ENCODE measurements at regions of chr3 and their contacts with region 1.

Region 1: DNA sequence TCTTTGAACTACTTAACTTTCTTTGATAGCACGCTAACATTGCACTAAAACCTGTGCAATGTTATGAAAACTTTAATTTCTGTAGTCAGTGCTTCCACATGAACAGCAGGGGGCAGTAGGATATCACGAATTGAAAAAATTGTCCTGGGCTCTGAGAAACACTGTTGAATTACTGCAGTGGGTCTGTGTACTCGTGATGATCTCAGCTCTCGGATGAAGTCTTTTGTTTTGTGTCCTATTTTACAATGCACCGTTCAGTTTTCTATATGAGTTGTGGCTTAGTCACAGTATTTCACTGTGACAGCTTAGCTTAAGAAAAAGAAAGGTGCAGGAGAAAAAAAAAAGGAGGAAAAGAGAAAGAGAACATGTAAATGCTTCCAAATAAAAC is 141.3 kb upstream of the CCDC54 start:
- DNase-seq: peak in 3 of 5 donors; percentile 31 to 60 (median 52)
- ATAC-seq: peak; percentile 60 to 81 (median 74)
- H3K4me3 ChIP-seq: peak overlapping the region in 11 of 12 donors; percentile 21 to 62 (median 49)
- H3K27ac ChIP-seq: peak overlapping the region in 11 of 12 donors; percentile 16 to 70 (median 53)
- H3K4me1 ChIP-seq: peaks cover 0 to 18% (median 8%) of the 10 kb centered on the region in 12 donors
- H3K27me3 ChIP-seq: no peaks in the 10 kb centered on the region
- CTCF ChIP-seq: peak; percentile 81 to 94 (median 89)
- POLR2A ChIP-seq: no peak

Region 2: DNA sequence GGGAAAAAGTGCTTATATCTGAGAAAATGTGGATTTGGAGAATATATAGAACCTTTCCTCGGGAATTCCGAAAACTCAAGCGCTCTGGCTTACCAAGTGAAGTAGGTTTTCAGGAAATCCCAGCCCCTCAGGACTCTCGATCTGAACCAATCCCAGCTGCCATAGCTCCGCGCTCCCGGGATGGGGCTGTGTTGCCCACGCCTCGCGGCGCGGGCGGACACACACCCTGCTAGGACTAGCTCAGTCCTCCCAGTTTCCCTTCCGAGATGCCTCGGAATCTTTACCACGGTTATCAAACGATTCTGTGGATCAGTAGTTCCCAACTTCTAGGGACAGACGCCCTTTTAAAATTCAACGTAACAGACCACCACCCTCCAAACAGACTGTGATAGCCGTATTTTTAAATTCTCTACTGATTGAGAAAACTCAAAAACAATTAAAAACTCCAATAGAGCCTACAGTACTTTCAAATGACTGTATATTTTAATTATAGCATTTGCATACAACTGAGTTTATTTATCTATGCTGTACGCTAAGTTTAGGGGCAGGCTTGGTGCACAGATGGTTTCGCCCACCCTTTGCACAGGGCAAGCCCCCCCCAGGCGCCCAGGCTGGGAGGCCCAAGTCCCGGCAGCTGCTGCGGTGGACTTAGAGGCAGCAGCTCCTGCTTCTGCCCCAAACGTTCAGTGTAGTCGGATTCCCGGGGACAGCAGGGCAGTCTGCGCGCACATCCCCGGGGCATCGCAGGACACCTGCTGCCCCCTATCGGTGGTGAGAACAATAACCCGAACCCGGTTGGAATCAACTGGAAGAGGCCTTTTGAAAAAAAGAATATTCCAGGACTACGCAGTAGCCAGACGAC is 193.6 kb after region 1 on chr3:
- intact Hi-C with region 1: loop called in 7 of 10 experiments (anchors 5 to 10 kb)
- DNase-seq: peak; percentile 80 to 86 (median 81)
- ATAC-seq: peak; percentile 81 to 89 (median 87)
- H3K4me3 ChIP-seq: peak overlapping the region; percentile 15 to 94 (median 78)
- H3K27ac ChIP-seq: peak overlapping the region; percentile 58 to 99 (median 96)
- H3K4me1 ChIP-seq: peaks cover 0 to 27% (median 7%) of the 10 kb centered on the region in 12 donors
- H3K27me3 ChIP-seq: no peaks in the 10 kb centered on the region
- CTCF ChIP-seq: peak; percentile 81 to 92 (median 88)
- POLR2A ChIP-seq: peak in 1 of 2 donors; percentile 25

Region 3: GRCh38 chr3:107441617-107442016 is 205.7 kb after region 1 on chr3:
- intact Hi-C with region 1: no loop called
- DNase-seq: no peak
- ATAC-seq: no peak
- H3K4me3 ChIP-seq: no peak overlapping the region
- H3K27ac ChIP-seq: no peak overlapping the region
- H3K4me1 ChIP-seq: no peaks in the 10 kb centered on the region
- H3K27me3 ChIP-seq: no peaks in the 10 kb centered on the region
- CTCF ChIP-seq: no peak
- POLR2A ChIP-seq: no peak

Region 4: DNA sequence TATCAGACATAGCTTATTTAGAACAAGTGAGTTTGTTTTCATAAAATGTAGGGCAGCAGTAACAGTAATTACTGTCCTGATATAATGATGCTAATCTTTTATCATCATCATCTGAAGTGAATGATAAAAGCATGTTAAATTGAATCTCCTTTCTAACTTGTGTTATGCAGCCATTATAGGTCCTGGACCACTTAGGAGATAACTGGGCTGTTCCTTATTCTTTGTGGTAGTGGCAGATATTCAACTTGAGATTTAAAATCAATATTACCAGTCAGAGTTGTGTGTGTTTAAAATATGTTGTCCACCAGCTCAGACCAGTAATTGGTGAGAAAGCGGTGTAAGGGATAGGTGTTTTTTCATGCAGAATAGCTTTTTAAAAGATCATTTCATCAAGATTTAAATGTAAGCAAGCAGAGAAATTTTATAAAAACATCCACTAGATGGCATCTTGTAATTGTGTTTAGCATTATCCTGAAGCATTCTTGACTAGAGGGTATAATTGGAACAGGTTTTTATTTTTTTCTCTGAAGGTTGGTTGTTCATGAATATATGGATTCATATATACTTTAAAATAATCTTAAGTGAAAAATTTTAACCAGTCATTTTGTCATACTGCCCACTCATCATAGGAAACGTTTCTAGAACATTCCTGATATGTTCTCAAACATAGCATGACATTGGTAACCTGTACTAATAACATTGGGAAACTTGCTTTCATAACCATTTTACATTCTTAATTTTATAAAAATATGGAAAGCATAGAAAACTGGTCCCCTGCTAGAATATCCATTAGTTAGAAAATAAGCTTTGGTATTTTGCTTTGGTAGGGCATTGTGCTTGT is 440.8 kb after region 1 on chr3:
- intact Hi-C with region 1: loop called in 1 of 10 experiments (anchors 10 kb)
- DNase-seq: no peak
- ATAC-seq: peak in 1 of 4 donors; percentile 59
- H3K4me3 ChIP-seq: no peak overlapping the region
- H3K27ac ChIP-seq: no peak overlapping the region
- H3K4me1 ChIP-seq: peaks cover 0 to 32% (median 18%) of the 10 kb centered on the region in 12 donors
- H3K27me3 ChIP-seq: no peaks in the 10 kb centered on the region
- CTCF ChIP-seq: peak in 11 of 12 donors; percentile 46 to 71 (median 59)
- POLR2A ChIP-seq: no peak

Region 5: DNA sequence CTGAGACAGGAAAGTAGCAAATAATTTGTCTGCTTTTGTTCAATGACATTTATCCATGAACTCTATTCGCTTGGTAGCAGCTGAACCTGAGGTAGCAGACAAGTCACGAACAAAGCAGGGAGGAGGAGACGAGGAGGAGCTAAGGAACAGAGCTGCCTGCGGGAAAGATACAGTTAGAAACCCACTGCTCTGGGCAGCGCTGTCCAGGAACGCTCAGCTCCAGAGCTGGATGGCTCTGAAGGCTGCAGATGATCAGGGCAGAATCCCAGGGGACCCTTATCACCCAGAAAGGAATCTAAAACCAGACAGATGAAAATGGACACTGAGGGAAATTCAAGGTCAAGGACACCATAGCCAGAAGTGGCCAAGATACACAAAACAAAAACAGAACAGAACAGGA is 597.1 kb after region 1 on chr3:
- intact Hi-C with region 1: loop called in 1 of 10 experiments (anchors 10 kb)
- DNase-seq: no peak
- ATAC-seq: no peak
- H3K4me3 ChIP-seq: no peak overlapping the region
- H3K27ac ChIP-seq: no peak overlapping the region
- H3K4me1 ChIP-seq: peaks cover 0 to 7% (median 0%) of the 10 kb centered on the region in 12 donors
- H3K27me3 ChIP-seq: no peaks in the 10 kb centered on the region
- CTCF ChIP-seq: no peak
- POLR2A ChIP-seq: no peak

Region 6: GRCh38 chr3:108477511-108478147 is 1241.7 kb after region 1 on chr3:
- intact Hi-C with region 1: loop called in 4 of 10 experiments (anchors 2 to 10 kb)
- DNase-seq: peak; percentile 20 to 51 (median 38)
- ATAC-seq: peak in 2 of 4 donors; percentile 50 to 56
- H3K4me3 ChIP-seq: no peak overlapping the region
- H3K27ac ChIP-seq: no peak overlapping the region
- H3K4me1 ChIP-seq: peaks cover 0 to 7% (median 0%) of the 10 kb centered on the region in 12 donors
- H3K27me3 ChIP-seq: no peaks in the 10 kb centered on the region
- CTCF ChIP-seq: peak; percentile 60 to 83 (median 68)
- POLR2A ChIP-seq: no peak

Measured in heart left ventricle (tissue), 16 donors.